K562 (cell line): ENCODE measurements at regions of chr2 and their contacts with region 1.

Region 1: GRCh38 chr2:96631804-96632435 is 6.2 kb downstream of the KANSL3 start:
- DNase-seq: no peak
- ATAC-seq: no peak
- H3K4me3 ChIP-seq: no peak overlapping the region
- H3K27ac ChIP-seq: no peak overlapping the region
- H3K4me1 ChIP-seq: peaks cover 3 to 10% of the 10 kb centered on the region in 2 experiments; a peak in 3 of 5 replicates
- H3K27me3 ChIP-seq: no peaks in the 10 kb centered on the region
- CTCF ChIP-seq: no peak
- EP300 ChIP-seq: no peak
- POLR2A ChIP-seq: no peak
- RAD21 ChIP-seq: no peak

Region 2: DNA sequence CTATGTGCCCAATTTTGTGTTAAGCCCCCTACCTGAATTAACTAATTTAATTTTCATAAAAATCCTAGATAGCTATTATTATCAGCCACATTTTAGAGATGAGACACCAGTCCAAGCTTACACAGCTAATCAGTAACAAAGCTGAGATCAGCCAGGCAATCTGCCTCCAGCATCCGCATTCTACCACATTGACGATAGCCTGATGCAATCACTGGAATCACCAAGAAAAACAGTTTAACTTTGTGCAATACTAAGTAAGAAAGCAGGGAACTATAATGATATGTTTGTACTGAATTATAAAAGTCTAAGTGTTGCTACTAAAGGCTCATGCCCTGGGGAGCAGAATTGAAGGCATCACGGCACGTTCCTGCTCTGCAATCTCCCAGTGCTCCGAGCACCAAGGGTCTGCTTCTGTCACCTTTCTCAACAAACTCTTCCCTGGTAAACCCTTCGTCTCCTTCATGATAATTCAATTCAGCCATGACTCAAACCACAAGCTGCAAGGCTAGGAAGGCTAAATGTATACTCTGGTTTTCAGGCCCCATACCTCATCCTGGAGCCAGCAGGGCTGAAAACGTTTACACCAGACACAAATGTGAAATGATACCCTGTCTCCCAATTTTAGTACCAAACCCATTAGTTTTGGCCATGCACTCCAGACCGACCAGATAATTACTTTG is 13.2 kb before region 1 on chr2:
- CTCF ChIA-PET with region 1: interaction called, 4 read pairs
- POLR2A ChIA-PET with region 1: interaction called, 70 read pairs
- in situ Hi-C with region 1: no loop called
- intact Hi-C with region 1: no loop called
- DNase-seq: no peak
- ATAC-seq: no peak
- H3K4me3 ChIP-seq: no peak overlapping the region
- H3K27ac ChIP-seq: no peak overlapping the region; the same call in 2 of the 3 replicates
- H3K4me1 ChIP-seq: peaks cover 0 to 4% of the 10 kb centered on the region in 2 experiments; a peak in 3 of 5 replicates
- H3K27me3 ChIP-seq: no peaks in the 10 kb centered on the region; a peak in 1 of 5 replicates
- CTCF ChIP-seq: no peak
- EP300 ChIP-seq: no peak; the same call in 1 of the 2 replicates
- POLR2A ChIP-seq: no peak
- RAD21 ChIP-seq: no peak